HepG2 (cell line): ENCODE measurements at regions of chr6 and their contacts with region 1.

Region 1: DNA sequence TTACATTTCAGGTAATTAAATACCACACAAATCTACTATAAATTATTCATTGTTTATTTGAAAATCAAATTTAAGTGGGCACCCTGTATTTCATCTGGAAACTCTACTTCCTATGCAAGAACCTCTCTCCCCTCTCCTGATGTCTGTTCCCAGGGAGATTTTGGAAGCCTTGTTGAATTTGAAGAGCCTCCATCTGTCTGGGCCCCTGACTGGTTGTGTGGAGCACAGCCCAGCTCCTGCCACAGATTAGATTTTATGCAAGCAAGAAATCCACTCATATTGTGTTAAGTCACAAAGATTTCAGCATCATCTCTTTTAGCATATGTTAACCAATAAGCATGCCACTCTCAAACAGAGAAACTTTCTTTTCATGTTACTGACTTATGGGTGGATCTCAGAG is 451.2 kb downstream of the TFAP2B start:
- DNase-seq: no peak
- ATAC-seq: no peak
- H3K4me3 ChIP-seq: no peak overlapping the region
- H3K27ac ChIP-seq: no peak overlapping the region
- H3K4me1 ChIP-seq: no peaks in the 10 kb centered on the region
- H3K27me3 ChIP-seq: no peaks in the 10 kb centered on the region
- CTCF ChIP-seq: no peak
- EP300 ChIP-seq: no peak
- POLR2A ChIP-seq: no peak
- RAD21 ChIP-seq: no peak

Region 2: GRCh38 chr6:50829898-50830439 is 439.9 kb before region 1 on chr6:
- CTCF ChIA-PET with region 1: no interaction called
- POLR2A ChIA-PET with region 1: no interaction called
- in situ Hi-C with region 1: no loop called
- intact Hi-C with region 1: no loop called
- DNase-seq: no peak
- ATAC-seq: no peak
- H3K4me3 ChIP-seq: no peak overlapping the region
- H3K27ac ChIP-seq: no peak overlapping the region
- H3K4me1 ChIP-seq: no peaks in the 10 kb centered on the region
- H3K27me3 ChIP-seq: peaks cover 0 to 10% of the 10 kb centered on the region in 2 experiments; a peak in 1 of 5 replicates
- CTCF ChIP-seq: no peak
- EP300 ChIP-seq: no peak
- POLR2A ChIP-seq: no peak
- RAD21 ChIP-seq: no peak

Region 3: GRCh38 chr6:51199105-51199552 is 70.7 kb before region 1 on chr6:
- CTCF ChIA-PET with region 1: no interaction called
- POLR2A ChIA-PET with region 1: no interaction called
- in situ Hi-C with region 1: no loop called
- intact Hi-C with region 1: loop called (anchors 2 kb)
- DNase-seq: no peak
- ATAC-seq: no peak
- H3K4me3 ChIP-seq: no peak overlapping the region
- H3K27ac ChIP-seq: no peak overlapping the region
- H3K4me1 ChIP-seq: no peaks in the 10 kb centered on the region
- H3K27me3 ChIP-seq: no peaks in the 10 kb centered on the region
- CTCF ChIP-seq: no peak
- EP300 ChIP-seq: no peak
- POLR2A ChIP-seq: no peak
- RAD21 ChIP-seq: no peak